Heart right ventricle (tissue), 16 donors: ENCODE measurements at regions of chr4 and their contacts with region 1.

Region 1: GRCh38 chr4:109559983-109560686 is at the start of gene MCUB:
- DNase-seq: peak; percentile 85 to 88
- ATAC-seq: peak; percentile 97 to 99 (median 98)
- H3K4me3 ChIP-seq: peak within 1 kb of the TSS; percentile 58 to 87 (median 74)
- H3K27ac ChIP-seq: peak within 1 kb of the TSS; percentile 69 to 94 (median 86)
- H3K4me1 ChIP-seq: peaks cover 0 to 24% (median 11%) of the 10 kb centered on the region in 9 donors
- H3K27me3 ChIP-seq: peaks cover 0 to 3% (median 0%) of the 10 kb centered on the region in 7 donors
- CTCF ChIP-seq: no peak
- total RNA-seq, gene MCUB: 1.7 to 12.6 (median 3.3) TPM

Region 2: GRCh38 chr4:109665783-109666485 is 105.8 kb after region 1 on chr4:
- intact Hi-C with region 1: loop called in 1 of 10 experiments (anchors 10 kb)
- DNase-seq: no peak
- ATAC-seq: no peak
- H3K4me3 ChIP-seq: no peak overlapping the region
- H3K27ac ChIP-seq: no peak overlapping the region
- H3K4me1 ChIP-seq: peaks cover 0 to 10% (median 0%) of the 10 kb centered on the region in 9 donors
- H3K27me3 ChIP-seq: no peaks in the 10 kb centered on the region
- CTCF ChIP-seq: no peak

Region 3: DNA sequence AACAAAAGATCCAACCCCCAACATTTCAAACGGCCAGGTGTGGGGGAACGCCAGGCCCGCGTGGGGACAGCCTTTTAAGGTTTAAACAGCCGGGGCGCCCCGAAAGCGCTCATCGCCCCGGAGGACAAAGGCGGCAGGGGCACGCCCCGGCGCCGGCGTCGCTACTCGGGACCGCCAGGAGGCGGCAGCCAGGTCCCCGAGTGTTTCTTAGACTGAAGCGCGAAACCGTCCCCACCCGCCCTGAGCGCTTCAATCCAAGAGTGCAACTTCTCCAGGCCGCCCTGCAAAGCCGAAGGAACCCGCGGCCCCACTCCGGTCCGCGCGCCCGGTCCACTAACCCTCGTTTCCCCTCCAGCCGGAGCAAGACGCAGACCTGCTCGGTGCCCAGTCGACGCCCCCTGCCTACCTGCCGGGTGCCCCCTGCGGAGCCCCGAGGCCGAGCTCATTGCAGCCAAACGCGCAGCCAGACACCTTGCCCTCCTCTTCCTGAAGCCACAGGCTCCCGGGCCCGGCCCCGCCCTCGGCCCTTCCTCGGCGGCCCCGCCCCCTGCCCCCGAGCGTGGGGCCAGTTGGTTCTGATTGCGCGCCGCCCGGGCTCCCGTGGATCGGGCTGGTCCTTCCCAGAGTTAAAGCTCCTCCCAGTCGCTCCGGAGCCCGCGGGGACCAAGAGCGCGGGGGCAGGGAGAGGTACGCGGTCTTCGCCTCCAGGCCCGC is 143.0 kb after region 1 on chr4 and contains the start of gene CASP6:
- intact Hi-C with region 1: loop called in 3 of 10 experiments (anchors 2 to 10 kb)
- DNase-seq: peak; percentile 85 to 89
- ATAC-seq: peak; percentile 93 to 98 (median 96)
- H3K4me3 ChIP-seq: peak within 1 kb of the TSS; percentile 64 to 96 (median 86)
- H3K27ac ChIP-seq: peak within 1 kb of the TSS; percentile 63 to 87 (median 81)
- H3K4me1 ChIP-seq: peaks cover 2 to 26% (median 15%) of the 10 kb centered on the region in 9 donors
- H3K27me3 ChIP-seq: no peaks in the 10 kb centered on the region
- CTCF ChIP-seq: peak; percentile 59 to 88 (median 78)
- total RNA-seq, gene CASP6: 3.0 to 10.2 (median 6.2) TPM